ENCODE measurements at regions of chr15 and their contacts with region 1.

Region 1: DNA sequence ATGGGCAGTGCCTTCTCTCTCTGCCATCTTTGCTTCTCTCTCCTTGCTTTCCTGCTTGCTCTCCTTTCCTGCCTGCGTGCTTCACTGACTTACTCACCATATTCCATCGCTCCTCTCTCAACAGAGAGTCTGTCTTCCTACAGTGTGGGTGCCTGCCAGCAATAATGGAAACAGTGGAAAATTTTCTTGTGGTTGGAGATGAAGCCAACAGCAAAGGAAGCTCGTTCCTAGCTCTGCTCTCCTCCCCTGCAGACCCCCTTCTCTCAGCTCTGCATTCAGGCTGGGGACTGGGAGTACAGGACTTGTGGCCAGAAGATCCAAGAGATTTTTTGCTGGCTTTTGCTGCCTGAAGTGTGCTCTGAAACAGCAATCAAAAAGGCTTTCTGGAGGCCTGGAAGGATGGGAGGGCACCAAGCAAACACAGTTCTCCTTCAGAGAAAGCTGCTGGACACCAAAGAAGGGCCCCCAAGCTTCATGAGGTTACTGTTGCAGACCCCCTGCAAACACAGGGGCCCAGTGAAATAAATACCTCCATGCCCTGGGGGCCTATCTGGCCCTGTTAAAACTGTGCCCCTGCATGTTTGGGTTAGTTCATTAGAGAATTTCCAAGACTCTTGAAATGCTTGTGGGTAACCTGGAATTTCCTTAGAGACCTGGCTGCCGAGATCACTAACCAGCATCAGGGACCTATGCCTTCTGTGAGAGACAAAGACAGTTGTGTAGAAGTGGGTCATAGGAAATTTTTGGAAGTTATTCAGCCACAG is 149.9 kb upstream of the RASGRP1 start:
- DNase-seq: no peak
- ATAC-seq: no peak
- H3K4me3 ChIP-seq: no peak overlapping the region
- H3K27ac ChIP-seq: peak overlapping the region in 1 of 2 experiments; percentile 26; a peak in 1 of 6 replicates
- H3K4me1 ChIP-seq: 0 out of 3 replicates have a peak, but pooled peaks cover 2% of the 10 kb centered on the region
- CTCF ChIP-seq: no peak
- EP300 ChIP-seq: no peak
- POLR2A ChIP-seq: no peak
- RAD21 ChIP-seq: no peak

Region 2: DNA sequence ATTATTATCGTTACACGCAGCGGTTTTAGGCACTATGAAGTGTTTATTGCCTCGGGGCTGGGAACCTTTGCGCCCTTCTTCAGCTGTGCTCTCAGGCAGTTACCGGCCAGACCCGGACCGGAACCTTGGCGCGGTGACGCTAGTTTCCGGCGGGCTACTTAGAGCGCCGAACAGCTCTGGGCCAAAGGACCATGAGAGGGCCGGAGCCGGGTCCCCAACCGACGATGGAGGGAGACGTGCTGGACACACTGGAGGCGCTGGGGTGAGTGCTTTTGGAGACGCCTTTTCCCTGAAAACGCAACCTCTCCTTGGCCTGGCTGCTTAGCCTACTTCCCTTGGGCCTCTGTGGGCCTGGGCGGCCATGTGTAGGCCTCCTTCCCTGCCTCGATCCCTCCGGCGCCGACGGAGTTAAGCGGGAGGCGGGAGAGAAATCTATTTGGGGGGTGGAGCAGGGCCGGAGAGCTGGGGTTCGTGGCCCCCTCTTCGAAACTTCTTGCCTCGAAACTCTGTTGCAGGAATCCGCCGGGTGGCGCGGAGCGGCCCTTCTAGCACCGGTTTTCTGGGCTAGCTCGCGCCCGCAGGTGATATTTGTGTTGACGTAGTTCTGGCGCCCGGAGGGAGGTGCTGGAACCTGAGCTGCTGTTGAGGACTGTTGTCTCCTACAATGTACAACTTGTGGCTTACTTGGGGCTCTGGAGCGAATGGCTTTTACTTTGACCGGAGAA is 260.4 kb before region 1 on chr15 and contains the start of gene FAM98B:
- CTCF ChIA-PET with region 1: no interaction called
- POLR2A ChIA-PET with region 1: no interaction called
- DNase-seq: peak; percentile 65 to 88
- ATAC-seq: peak; percentile 98 to 99
- H3K4me3 ChIP-seq: peak within 1 kb of the TSS; percentile 85
- H3K27ac ChIP-seq: peak within 1 kb of the TSS; percentile 92 to 98
- H3K4me1 ChIP-seq: no peaks in the 10 kb centered on the region
- CTCF ChIP-seq: no peak
- EP300 ChIP-seq: no peak
- POLR2A ChIP-seq: peak; percentile 42
- RAD21 ChIP-seq: no peak
- polyA plus RNA-seq, gene FAM98B: 15.4 and 18.8 TPM in 2 replicates

Region 3: DNA sequence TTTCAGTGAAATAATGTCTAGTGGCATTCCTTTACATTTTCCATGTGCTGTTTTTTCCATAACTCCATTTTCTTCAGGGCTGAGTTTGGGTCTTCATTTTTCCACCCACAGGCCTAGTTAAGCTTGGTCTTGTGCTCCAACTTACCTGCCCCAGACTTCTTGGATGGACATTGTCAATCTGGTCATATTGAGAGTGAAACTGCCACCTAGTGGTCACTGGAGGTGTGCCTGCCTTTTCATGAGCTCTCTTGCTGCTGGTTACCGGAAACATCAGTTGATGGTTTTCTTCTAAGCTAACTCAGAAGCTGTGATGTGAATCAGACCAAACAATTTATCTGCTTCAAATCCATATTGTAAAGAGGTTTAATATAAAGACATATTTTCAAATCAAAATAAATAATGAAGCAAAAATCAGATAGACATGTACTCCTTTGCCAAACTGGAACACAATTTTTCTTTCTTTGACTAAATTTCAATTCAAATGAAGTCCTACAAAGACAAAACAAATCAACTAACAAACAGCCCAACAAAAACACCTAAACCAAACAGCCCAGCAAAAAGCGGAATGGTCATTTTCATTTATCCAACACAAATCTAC is 14.8 kb before region 1 on chr15:
- CTCF ChIA-PET with region 1: interaction called, 17 read pairs
- POLR2A ChIA-PET with region 1: no interaction called
- DNase-seq: peak; percentile 50 to 61
- ATAC-seq: peak; percentile 68 to 80; a peak in 3 of 6 replicates
- H3K4me3 ChIP-seq: no peak overlapping the region
- H3K27ac ChIP-seq: no peak overlapping the region
- H3K4me1 ChIP-seq: peaks cover 9% of the 10 kb centered on the region; the same call in 2 of the 3 replicates
- CTCF ChIP-seq: peak; percentile 53
- EP300 ChIP-seq: no peak
- POLR2A ChIP-seq: no peak
- RAD21 ChIP-seq: peak; percentile 51 to 54; a peak in 4 of 5 replicates

Region 4: DNA sequence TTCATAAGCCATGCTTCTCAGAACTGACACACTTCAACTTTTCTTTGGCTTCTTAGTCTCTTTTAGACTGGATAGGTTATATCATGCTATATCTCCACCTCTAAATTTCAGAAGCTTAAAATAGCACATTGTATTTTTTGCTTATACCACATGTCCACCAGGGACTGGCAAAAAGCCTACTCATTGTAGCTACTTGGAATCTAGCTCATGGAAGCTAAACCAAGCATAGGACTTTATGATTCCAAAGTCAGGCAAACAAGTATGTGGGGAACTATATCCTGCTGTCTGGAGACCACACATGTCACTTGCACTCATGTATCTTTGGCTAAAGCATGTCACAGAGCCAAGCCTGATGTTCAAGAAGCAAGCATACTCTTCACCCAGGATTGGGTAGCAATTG is 95.1 kb after region 1 on chr15:
- CTCF ChIA-PET with region 1: no interaction called
- POLR2A ChIA-PET with region 1: no interaction called
- DNase-seq: no peak
- ATAC-seq: no peak
- H3K4me3 ChIP-seq: no peak overlapping the region
- H3K27ac ChIP-seq: no peak overlapping the region
- H3K4me1 ChIP-seq: no peaks in the 10 kb centered on the region
- CTCF ChIP-seq: no peak
- EP300 ChIP-seq: no peak
- POLR2A ChIP-seq: no peak
- RAD21 ChIP-seq: no peak